ENCODE measurements at regions of chr10 and their contacts with region 1.

Region 1: DNA sequence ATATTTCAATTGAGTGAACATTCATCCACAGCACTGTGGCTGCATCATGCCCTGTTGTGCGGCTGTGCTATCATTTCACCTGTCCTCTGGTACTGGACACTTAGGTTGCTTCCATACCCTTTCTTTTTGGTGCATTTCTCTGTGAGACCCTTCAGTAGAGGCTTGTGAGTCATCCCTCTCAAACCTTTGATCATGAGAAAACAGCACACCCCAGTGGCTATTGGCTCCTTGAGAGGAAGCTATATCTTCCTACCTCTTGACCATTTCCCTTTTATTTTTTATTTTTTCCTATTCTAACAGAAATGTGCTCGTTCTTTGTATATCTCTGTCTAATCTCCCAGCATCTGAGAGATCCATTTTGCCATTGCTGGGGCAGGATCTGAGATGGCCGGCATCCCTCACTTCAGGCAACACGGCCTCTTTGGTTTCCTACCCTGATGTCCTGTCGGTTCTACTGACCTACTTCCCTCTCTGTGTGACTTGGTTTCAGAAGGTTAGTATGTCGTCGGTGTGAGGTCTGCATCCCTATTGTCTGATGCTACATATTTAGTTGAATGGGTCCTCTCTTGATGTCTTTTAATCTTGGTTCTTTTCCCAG is 23.8 kb upstream of the PIK3AP1 start:
- DNase-seq: no peak
- ATAC-seq: no peak
- H3K4me3 Mint-ChIP-seq: no peak overlapping the region
- H3K27ac Mint-ChIP-seq: peak overlapping the region; percentile 77
- H3K4me1 Mint-ChIP-seq: peaks cover 73% of the 10 kb centered on the region
- H3K27me3 Mint-ChIP-seq: no peaks in the 10 kb centered on the region
- CTCF ChIP-seq: no peak

Region 2: GRCh38 chr10:96642973-96643372 is 101.1 kb before region 1 on chr10:
- CTCF ChIA-PET with region 1: interaction called, 70 read pairs
- POLR2A ChIA-PET with region 1: interaction called, 11 read pairs
- intact Hi-C with region 1: loop called (anchors 1 kb)
- DNase-seq: peak; percentile 54
- ATAC-seq: no peak
- H3K4me3 Mint-ChIP-seq: no peak overlapping the region
- H3K27ac Mint-ChIP-seq: peak overlapping the region; percentile 56
- H3K4me1 Mint-ChIP-seq: peaks cover 58% of the 10 kb centered on the region
- H3K27me3 Mint-ChIP-seq: no peaks in the 10 kb centered on the region
- CTCF ChIP-seq: no peak

Region 3: GRCh38 chr10:96758423-96758822 is 14.3 kb after region 1 on chr10:
- CTCF ChIA-PET with region 1: interaction called, 8 read pairs
- POLR2A ChIA-PET with region 1: interaction called, 9 read pairs
- intact Hi-C with region 1: loop called (anchors 1 kb)
- DNase-seq: no peak
- ATAC-seq: peak; percentile 62
- H3K4me3 Mint-ChIP-seq: peak overlapping the region; percentile 36
- H3K27ac Mint-ChIP-seq: peak overlapping the region; percentile 82
- H3K4me1 Mint-ChIP-seq: peaks cover 64% of the 10 kb centered on the region
- H3K27me3 Mint-ChIP-seq: no peaks in the 10 kb centered on the region
- CTCF ChIP-seq: no peak